PC-3 (cell line): ENCODE measurements at regions of chr7 and their contacts with region 1.

Region 1: GRCh38 chr7:48242846-48243245 is 71.6 kb downstream of the ABCA13 start:
- DNase-seq: no peak
- ATAC-seq: no peak
- H3K4me3 ChIP-seq: no peak overlapping the region
- H3K27ac ChIP-seq: no peak overlapping the region
- H3K4me1 ChIP-seq: peaks cover 21% of the 10 kb centered on the region
- H3K27me3 ChIP-seq: no peaks in the 10 kb centered on the region
- CTCF ChIP-seq: no peak

Region 2: DNA sequence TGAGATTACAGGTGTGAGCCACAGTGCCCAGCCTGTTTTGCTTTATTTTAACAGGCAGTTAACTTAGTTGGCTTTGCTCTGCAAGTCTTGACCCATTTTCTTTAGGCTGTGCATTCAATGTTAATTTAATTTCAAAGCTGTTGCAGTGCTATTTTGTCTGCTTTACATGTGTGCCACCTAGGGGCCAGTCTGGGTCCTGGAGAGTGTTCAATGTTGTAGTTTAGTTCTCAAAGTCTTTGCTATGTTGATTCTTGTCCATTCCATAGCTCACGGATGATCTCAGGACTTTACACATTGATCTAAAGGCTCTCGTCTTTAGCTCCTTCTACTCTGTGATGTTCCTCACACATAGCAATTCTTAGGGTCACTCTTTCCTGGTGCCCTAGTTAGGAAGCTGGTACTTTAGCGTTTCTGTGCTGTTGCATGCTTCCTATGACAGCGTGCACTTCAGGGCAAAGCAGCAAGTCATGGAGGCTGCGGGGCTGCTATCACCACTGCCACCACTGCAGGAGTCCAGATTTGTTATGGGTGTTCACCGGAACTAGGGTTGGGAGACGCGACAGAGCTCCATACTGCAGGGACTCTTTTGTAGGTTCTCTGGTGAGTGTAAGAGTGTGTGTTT is 87.9 kb before region 1 on chr7:
- CTCF ChIA-PET with region 1: no interaction called
- POLR2A ChIA-PET with region 1: no interaction called
- intact Hi-C with region 1: no loop called
- DNase-seq: peak; percentile 62
- ATAC-seq: peak; percentile 94
- H3K4me3 ChIP-seq: no peak overlapping the region
- H3K27ac ChIP-seq: no peak overlapping the region
- H3K4me1 ChIP-seq: 0 out of 2 replicates have a peak, but pooled peaks cover 9% of the 10 kb centered on the region
- H3K27me3 ChIP-seq: no peaks in the 10 kb centered on the region
- CTCF ChIP-seq: peak; percentile 83

Region 3: DNA sequence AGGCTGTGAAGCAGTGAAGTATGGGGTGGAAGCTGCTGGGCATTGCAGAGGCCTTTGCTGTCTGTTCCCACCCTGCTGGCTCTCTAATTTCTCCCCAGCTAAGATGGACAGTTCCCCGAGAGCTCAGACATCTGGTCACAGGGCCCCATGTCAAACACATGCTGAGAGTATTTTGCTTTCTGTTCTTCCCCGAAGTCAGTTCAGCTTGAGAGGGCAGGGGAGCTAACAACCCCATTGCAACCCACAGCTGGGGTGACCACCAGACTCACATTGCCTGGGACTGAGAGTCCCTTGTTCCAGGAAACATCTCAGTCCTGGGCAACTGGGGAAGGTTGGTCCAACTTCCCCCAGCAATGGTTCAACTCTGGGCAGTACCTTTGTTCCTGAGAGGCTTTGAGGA is 18.8 kb before region 1 on chr7:
- CTCF ChIA-PET with region 1: no interaction called
- POLR2A ChIA-PET with region 1: no interaction called
- intact Hi-C with region 1: loop called (anchors 1 kb)
- DNase-seq: no peak
- ATAC-seq: no peak
- H3K4me3 ChIP-seq: no peak overlapping the region
- H3K27ac ChIP-seq: no peak overlapping the region
- H3K4me1 ChIP-seq: no peaks in the 10 kb centered on the region
- H3K27me3 ChIP-seq: no peaks in the 10 kb centered on the region
- CTCF ChIP-seq: no peak

Region 4: GRCh38 chr7:48255046-48255445 is 12.2 kb after region 1 on chr7:
- CTCF ChIA-PET with region 1: no interaction called
- POLR2A ChIA-PET with region 1: no interaction called
- intact Hi-C with region 1: no loop called
- DNase-seq: no peak
- ATAC-seq: no peak
- H3K4me3 ChIP-seq: no peak overlapping the region
- H3K27ac ChIP-seq: no peak overlapping the region
- H3K4me1 ChIP-seq: peaks cover 23% of the 10 kb centered on the region
- H3K27me3 ChIP-seq: no peaks in the 10 kb centered on the region
- CTCF ChIP-seq: no peak